Esophagus muscularis mucosa (tissue), 4 donors: ENCODE measurements at regions of chr9 and their contacts with region 1.

Region 1: GRCh38 chr9:17160327-17160726 is 25.5 kb downstream of the CNTLN start:
- DNase-seq: no peak
- H3K4me3 ChIP-seq: no peak overlapping the region
- H3K27ac ChIP-seq: no peak overlapping the region
- H3K4me1 ChIP-seq: no peaks in the 10 kb centered on the region
- H3K27me3 ChIP-seq: no peaks in the 10 kb centered on the region
- CTCF ChIP-seq: no peak
- EP300 ChIP-seq: no peak
- POLR2A ChIP-seq: no peak

Region 2: DNA sequence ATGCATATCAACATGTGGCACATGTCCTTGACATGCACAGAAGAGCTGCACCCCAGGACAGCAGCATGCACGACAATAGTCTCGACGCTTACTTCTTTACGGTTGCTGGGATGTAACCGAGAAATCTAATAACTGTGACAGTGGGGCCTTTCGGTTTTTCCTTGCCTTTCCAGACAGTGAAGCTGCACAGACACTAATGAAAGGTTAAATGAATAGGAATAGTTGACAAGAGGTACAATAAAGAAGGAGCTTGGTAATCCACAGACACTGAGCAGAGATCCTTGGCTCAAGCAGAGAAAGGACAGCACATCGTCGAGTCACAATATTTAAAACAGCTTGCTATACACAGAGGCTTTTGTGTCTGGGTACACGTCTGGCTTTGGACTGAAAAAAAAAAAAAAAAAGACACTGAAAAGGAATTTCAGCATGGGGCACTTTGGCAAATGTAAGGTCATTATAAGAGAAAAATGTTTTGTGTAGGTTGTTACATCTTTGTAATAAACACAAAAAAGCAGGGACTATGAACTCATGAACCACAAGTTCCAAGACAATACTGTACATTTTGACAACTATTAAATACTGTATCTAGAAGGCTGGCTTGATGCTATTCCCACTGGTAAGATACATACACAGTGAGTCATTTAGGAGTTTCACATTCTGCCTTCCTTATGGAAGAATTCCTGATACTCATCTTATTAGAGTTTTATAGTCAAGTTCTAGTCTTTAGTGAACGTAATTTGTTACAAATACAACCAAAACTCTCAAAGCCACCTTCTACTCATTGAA is 295.5 kb before region 1 on chr9:
- intact Hi-C with region 1: no loop called
- DNase-seq: no peak
- H3K4me3 ChIP-seq: peak overlapping the region; percentile 4 to 24 (median 22)
- H3K27ac ChIP-seq: peak overlapping the region; percentile 89 to 97 (median 95)
- H3K4me1 ChIP-seq: peaks cover 0 to 88% (median 62%) of the 10 kb centered on the region in 4 donors
- H3K27me3 ChIP-seq: no peaks in the 10 kb centered on the region
- CTCF ChIP-seq: no peak
- EP300 ChIP-seq: no peak
- POLR2A ChIP-seq: no peak

Region 3: DNA sequence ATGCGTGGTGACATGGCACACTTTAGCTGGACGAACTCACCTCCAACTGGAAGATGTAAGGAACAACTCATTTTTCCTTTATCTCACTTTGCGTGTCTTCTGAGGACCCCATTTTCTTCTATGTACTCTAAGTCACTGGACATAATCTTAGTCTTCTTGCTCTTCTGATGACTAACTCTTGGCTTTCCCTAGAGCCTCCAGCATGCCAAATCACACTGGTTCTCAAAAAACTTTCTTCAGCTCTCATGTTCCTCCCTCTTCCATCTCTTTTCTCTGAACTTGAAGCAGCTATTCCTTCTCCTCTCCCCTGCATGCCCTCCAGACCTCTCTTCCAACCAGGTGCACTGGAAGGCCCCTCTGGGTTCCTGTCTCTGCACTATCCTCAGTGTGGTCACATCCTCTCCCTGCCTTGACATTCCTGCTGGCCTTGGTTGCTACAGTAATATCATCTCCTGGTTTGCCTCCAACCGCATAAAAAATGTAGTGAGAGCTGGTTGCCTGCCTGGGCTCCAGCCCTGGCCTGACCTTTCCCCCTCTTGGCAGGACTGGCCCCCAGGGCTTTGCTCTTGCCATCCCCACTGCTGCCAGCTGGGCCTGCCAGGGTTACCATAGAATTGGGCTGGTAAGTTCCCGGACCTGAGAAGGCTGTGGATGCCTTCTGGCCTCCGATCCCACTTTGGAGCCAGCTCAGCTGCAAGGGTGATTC is 245.0 kb before region 1 on chr9:
- intact Hi-C with region 1: no loop called
- DNase-seq: no peak
- H3K4me3 ChIP-seq: no peak overlapping the region
- H3K27ac ChIP-seq: no peak overlapping the region
- H3K4me1 ChIP-seq: no peaks in the 10 kb centered on the region
- H3K27me3 ChIP-seq: no peaks in the 10 kb centered on the region
- CTCF ChIP-seq: no peak
- EP300 ChIP-seq: no peak
- POLR2A ChIP-seq: no peak

Region 4: DNA sequence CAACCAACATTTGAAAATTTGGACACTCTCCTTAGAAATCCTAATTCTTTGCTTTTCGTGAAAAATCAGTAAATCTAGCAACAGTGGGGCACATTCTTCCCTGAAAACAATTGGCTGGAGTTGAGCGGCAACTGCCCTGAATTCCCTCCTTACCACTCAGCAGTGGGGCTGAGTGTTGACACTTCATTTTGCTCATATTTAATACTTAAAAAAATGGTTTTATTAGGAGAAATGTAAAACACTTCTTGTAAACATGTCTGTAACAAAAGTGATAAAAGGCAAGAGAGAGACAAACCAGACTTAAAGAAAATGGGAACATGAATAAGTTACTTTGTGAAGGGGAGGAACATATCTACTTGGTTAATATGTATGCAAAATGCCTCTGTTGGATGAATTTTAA is 168.0 kb after region 1 on chr9:
- intact Hi-C with region 1: loop called (anchors 5 kb)
- DNase-seq: no peak
- H3K4me3 ChIP-seq: no peak overlapping the region
- H3K27ac ChIP-seq: no peak overlapping the region
- H3K4me1 ChIP-seq: no peaks in the 10 kb centered on the region
- H3K27me3 ChIP-seq: no peaks in the 10 kb centered on the region
- CTCF ChIP-seq: no peak
- EP300 ChIP-seq: no peak
- POLR2A ChIP-seq: no peak